ENCODE measurements at regions of chr11 and their contacts with region 1.

Region 1: GRCh38 chr11:86919557-86920210 is 35.5 kb downstream of the FZD4 start:
- DNase-seq: no peak

Region 2: DNA sequence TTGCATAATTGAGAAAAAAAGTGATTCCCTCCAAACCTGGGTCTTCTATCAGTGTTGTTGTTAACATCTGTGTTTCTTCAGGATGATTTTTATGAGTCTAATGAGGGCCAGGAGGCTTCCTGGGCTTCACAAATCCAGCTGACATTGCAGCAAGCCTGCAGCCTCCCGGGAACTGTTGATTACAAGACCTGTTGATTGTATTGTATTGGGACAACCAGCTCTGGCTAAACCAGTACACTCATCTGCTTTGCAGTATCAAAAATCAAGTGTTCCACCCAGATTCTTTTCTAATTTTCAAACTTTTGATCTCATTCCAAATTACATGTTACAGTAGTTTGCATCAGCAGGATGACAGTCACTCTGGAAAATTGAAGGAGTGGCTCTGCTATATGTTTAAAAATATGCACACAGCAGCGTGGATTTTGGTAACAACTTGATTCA is 135.4 kb before region 1 on chr11:
- intact Hi-C with region 1: no loop called
- DNase-seq: no peak

Region 3: GRCh38 chr11:86869966-86870570 is 49.6 kb before region 1 on chr11:
- intact Hi-C with region 1: loop called (anchors 2 to 5 kb)
- DNase-seq: peak; percentile 83

Region 4: GRCh38 chr11:87398931-87399330 is 479.2 kb after region 1 on chr11:
- intact Hi-C with region 1: no loop called
- DNase-seq: no peak

Region 5: DNA sequence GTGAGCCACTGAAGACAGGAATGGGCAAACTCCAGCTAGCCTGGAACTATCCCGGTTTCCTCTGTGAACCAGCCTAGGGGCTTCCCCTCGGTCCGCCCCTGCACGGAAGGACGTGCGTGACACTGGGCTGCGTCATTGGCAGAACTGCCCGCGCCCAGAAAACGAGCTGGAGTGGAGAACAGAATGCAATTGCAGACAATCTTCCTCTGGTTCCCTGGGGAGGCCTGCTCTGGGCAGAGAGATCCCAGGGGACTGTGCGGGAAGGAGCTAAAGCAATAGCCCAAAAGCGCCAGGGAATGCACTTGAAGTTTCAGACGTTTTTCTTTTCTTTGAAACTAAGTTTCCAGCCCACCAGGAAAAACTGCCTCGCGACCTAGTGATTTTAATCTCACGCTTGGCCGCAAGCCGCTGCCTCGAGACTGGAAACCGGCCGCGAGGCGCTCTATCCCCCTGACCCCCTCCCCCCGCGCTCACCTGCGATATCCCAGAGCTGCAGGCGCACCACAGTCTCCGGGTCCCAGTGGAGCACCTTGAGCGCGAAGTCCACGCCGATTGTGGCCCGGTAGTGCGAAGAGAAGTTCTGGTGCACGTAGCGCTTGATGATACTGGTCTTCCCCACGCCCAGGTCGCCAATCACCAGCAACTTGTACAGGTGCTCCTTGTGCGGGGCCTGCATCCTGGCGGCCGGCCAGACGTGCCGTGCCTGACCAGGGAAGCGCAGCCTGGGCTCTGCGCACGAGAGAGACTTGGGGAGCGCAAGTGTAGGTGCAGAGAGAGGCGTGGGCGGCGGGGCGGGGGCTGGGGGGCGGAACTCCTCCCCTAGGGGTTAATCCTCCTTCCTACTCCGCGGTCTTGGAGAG is 1255.3 kb after region 1 on chr11 and contains the start of gene RAB38:
- intact Hi-C with region 1: loop called in 1 of 2 experiments (anchors 5 kb)
- DNase-seq: peak; percentile 93
- total RNA-seq, gene RAB38: 0.86 to 0.97 TPM

Measured in posterior vena cava (tissue), 2 donors.